ENCODE measurements at regions of chr2 and their contacts with region 1.

Region 1: GRCh38 chr2:68157002-68157401 is 686 bp upstream of the PNO1 start:
- DNase-seq: peak in 3 of 35 experiments; percentile 0 to 3 (median 1)
- ATAC-seq: peak; percentile 51 to 55 (median 52)
- H3K4me3 ChIP-seq: peak overlapping the region; percentile 68 to 94
- H3K4me3 Mint-ChIP-seq: peak overlapping the region; percentile 96 to 97 (median 97)
- H3K27ac ChIP-seq: peak overlapping the region; percentile 91
- H3K27ac Mint-ChIP-seq: peak overlapping the region; percentile 99 to 100
- H3K4me1 ChIP-seq: peaks cover 22 to 41% of the 10 kb centered on the region in 2 experiments
- H3K4me1 Mint-ChIP-seq: peaks cover 61 to 66% (median 64%) of the 10 kb centered on the region in 3 donors
- H3K27me3 ChIP-seq: no peaks in the 10 kb centered on the region
- H3K27me3 Mint-ChIP-seq: no peaks in the 10 kb centered on the region

Region 2: GRCh38 chr2:68185541-68186164 is 28.7 kb after region 1 on chr2:
- CTCF ChIA-PET with region 1: interaction called, 3 to 12 read pairs
- POLR2A ChIA-PET with region 1: interaction called, 3 to 18 read pairs
- DNase-seq: peak; percentile 4 to 81 (median 40)
- ATAC-seq: peak in 1 of 4 experiments; percentile 69
- H3K4me3 ChIP-seq: no peak overlapping the region
- H3K4me3 Mint-ChIP-seq: no peak overlapping the region
- H3K27ac ChIP-seq: no peak overlapping the region
- H3K27ac Mint-ChIP-seq: peak overlapping the region in 1 of 2 donors; percentile 44
- H3K4me1 ChIP-seq: peaks cover 2 to 5% of the 10 kb centered on the region in 2 experiments
- H3K4me1 Mint-ChIP-seq: peaks cover 37 to 48% (median 48%) of the 10 kb centered on the region in 3 donors
- H3K27me3 ChIP-seq: no peaks in the 10 kb centered on the region
- H3K27me3 Mint-ChIP-seq: no peaks in the 10 kb centered on the region

Region 3: GRCh38 chr2:68214381-68214780 is 57.4 kb after region 1 on chr2:
- CTCF ChIA-PET with region 1: no interaction called
- POLR2A ChIA-PET with region 1: no interaction called
- DNase-seq: no peak
- ATAC-seq: no peak
- H3K4me3 ChIP-seq: no peak overlapping the region
- H3K4me3 Mint-ChIP-seq: no peak overlapping the region
- H3K27ac ChIP-seq: no peak overlapping the region
- H3K27ac Mint-ChIP-seq: peak overlapping the region; percentile 45 to 70
- H3K4me1 ChIP-seq: peaks cover 2 to 7% of the 10 kb centered on the region in 2 experiments
- H3K4me1 Mint-ChIP-seq: peaks cover 70 to 82% (median 79%) of the 10 kb centered on the region in 3 donors
- H3K27me3 ChIP-seq: no peaks in the 10 kb centered on the region
- H3K27me3 Mint-ChIP-seq: no peaks in the 10 kb centered on the region

Region 4: DNA sequence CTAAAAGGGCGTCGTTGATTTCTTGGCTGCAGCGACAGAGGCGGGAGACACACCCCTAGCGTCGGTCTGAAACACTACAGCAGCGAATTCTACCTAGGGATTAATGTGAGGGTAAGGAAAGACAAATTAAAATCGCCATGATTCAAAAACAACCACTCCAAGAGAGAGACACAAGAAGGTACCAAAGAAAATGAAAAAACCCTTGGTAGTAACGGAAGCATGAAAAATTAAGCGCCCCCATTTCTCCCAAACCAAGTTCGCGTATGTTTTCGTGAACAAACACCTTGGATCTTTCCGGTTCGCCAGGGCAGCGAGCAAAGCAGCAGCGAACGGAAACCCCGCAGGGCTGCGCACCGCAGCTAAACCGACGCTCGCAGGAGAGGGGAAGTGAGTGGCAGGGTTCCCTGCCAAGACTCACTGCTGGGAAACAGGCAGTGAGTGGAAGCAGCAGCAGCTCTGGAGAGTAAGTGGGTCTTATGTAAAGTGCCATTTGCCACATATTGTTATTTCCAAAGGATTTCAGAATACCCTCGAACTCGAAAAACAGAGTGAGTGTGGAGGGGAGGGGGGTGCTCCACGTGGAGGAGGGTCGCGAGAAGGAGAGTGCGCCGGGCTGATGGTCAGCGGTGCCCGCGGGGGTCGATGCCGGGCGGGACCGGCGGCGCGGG is 94.3 kb after region 1 on chr2:
- CTCF ChIA-PET with region 1: interaction called, 3 read pairs
- POLR2A ChIA-PET with region 1: interaction called in 1 of 2 experiments, 13 read pairs
- DNase-seq: peak; percentile 52 to 91 (median 78)
- ATAC-seq: peak; percentile 62 to 70 (median 66)
- H3K4me3 ChIP-seq: peak overlapping the region; percentile 86 to 99
- H3K4me3 Mint-ChIP-seq: peak overlapping the region in 2 of 3 donors; percentile 87 to 88
- H3K27ac ChIP-seq: peak overlapping the region; percentile 92
- H3K27ac Mint-ChIP-seq: peak overlapping the region; percentile 92 to 95
- H3K4me1 ChIP-seq: peaks cover 24 to 50% of the 10 kb centered on the region in 2 experiments
- H3K4me1 Mint-ChIP-seq: peaks cover 38 to 56% (median 45%) of the 10 kb centered on the region in 3 donors
- H3K27me3 ChIP-seq: no peaks in the 10 kb centered on the region
- H3K27me3 Mint-ChIP-seq: no peaks in the 10 kb centered on the region

Measured in T-cell (primary cell).